ENCODE measurements at regions of chr4 and their contacts with region 1.

Region 1: DNA sequence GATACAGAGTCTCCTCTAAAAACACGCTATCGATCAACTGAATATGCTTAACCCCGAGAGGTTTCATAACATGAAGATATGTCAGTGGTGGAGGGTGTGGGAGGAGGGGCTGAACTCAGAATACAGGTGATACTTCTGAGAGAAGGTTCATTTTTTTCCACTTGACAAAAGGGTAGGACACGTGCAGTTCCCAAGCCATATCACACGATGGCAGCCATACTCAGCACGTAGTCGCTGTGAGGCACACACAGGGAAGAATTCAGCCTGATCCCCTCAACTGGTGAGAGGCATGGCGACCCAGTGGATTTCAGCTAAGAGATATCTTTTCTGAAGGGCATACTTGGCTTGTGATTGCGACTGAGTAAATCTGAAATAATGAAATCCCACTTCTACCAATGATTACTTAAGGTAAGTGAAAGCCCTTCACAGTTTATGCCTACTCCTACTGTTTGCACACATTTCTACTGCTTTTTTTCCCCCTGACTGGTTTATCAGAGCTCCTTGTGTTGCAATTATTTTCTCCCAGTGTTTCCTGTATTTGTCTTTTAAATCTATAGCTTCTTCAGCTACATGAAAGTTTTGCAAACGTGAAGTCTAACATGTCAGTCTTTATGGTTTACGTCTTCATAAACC is 133.1 kb downstream of the CORIN start:
- DNase-seq: peak; percentile 58
- H3K4me3 ChIP-seq: no peak overlapping the region
- H3K27ac ChIP-seq: no peak overlapping the region
- H3K4me1 ChIP-seq: peaks cover 0 to 4% of the 10 kb centered on the region in 2 experiments; a peak in 3 of 4 replicates
- H3K27me3 ChIP-seq: no peaks in the 10 kb centered on the region
- CTCF ChIP-seq: peak; percentile 46
- EP300 ChIP-seq: no peak
- RAD21 ChIP-seq: peak; percentile 92

Region 2: GRCh38 chr4:47686294-47686872 is 18.4 kb before region 1 on chr4:
- CTCF ChIA-PET with region 1: interaction called, 15 read pairs
- POLR2A ChIA-PET with region 1: no interaction called
- DNase-seq: peak; percentile 42
- H3K4me3 ChIP-seq: no peak overlapping the region; a peak in 1 of 4 replicates
- H3K27ac ChIP-seq: no peak overlapping the region
- H3K4me1 ChIP-seq: no peaks in the 10 kb centered on the region
- H3K27me3 ChIP-seq: no peaks in the 10 kb centered on the region
- CTCF ChIP-seq: peak; percentile 66
- EP300 ChIP-seq: no peak
- RAD21 ChIP-seq: peak; percentile 61

Region 3: DNA sequence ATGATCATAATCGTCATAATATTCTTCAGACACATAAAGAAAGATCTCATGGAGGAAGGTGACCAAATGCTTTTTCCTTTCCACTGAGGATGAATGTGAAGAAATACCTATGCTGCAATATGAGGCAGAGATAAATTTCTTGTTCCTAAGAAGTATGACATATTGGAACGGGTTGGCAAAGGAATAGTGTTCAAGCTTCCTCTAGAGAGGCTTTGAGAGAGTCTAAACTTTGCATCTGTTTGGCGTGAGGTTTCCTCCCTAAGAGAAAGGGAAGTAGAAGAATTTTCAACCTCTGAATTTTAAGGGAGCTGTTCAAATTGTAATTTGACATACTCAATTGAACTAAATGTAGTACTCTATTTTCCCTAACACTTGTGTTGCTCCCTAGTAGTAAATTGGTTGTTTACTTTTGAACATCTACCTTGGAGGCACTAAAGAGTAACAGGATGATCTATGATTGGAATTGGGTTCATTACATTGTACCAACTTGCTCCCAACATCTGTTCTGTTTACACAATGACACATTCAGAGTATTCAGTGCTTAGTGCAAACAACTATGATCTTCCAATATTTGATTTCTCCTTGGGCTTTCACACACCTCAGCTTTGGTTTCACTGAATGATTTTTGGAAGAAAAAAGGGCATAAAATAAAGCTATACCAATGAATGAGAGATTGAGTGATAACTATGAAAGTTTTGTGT is 11.1 kb after region 1 on chr4:
- CTCF ChIA-PET with region 1: interaction called, 30 read pairs
- POLR2A ChIA-PET with region 1: no interaction called
- DNase-seq: no peak
- H3K4me3 ChIP-seq: no peak overlapping the region
- H3K27ac ChIP-seq: no peak overlapping the region
- H3K4me1 ChIP-seq: no peaks in the 10 kb centered on the region; a peak in 1 of 4 replicates
- H3K27me3 ChIP-seq: 0 out of 2 replicates have a peak, but pooled peaks cover 6% of the 10 kb centered on the region
- CTCF ChIP-seq: no peak
- EP300 ChIP-seq: no peak
- RAD21 ChIP-seq: no peak

Region 4: DNA sequence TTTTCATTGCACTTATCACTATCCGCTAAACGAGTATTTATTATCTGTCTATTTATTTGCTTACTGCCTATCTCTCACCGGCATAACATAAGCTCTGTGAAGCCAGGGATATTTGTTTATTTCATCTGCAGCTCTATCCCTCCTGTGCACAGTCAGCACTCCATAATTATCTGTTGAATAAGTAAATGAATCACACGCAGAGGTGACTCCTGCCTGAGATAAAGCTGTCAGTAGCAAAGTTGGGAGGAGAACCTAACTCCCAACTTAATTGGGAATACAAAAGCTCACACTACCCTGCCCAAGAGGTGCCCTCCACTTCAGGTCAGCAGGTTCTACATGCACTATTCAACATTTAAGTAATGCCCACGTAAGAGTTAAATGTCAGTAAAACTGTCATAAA is 47.4 kb after region 1 on chr4:
- CTCF ChIA-PET with region 1: interaction called, 12 read pairs
- POLR2A ChIA-PET with region 1: no interaction called
- DNase-seq: no peak
- H3K4me3 ChIP-seq: no peak overlapping the region
- H3K27ac ChIP-seq: no peak overlapping the region
- H3K4me1 ChIP-seq: 0 out of 4 replicates have a peak, but pooled peaks cover 0 to 3% of the 10 kb centered on the region in 2 experiments
- H3K27me3 ChIP-seq: no peaks in the 10 kb centered on the region
- CTCF ChIP-seq: no peak
- EP300 ChIP-seq: no peak
- RAD21 ChIP-seq: no peak

Region 5: DNA sequence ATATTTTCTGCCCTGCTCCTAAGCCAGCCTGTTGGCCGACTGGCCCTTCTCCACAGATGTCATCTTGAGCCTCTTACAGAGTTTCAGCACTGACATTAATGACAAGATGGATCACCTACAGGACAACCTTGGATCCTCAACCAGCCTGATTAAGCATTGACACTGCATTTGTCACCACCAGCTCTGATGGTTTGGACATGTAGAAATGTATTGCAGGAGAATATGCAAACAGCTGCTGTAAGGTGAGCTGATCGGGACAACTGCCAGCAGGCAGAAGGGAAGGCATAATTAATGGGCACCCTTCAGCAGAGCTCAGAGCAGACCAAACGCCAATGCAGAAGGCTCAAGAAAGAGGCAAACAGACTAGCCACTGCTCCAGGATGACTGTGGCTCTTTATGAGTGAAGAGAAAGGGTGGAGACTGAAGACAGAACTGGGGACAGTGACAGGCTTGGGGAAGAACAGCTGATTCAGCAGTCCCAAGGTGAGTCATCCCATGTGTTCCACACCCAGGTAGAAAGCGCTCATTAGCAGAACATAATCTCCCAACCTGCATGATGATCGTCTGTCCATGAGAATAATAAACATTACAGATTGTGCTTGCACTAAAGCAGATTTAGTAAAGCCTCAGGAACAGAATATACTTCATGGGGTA is 126.3 kb after region 1 on chr4:
- CTCF ChIA-PET with region 1: interaction called, 417 read pairs
- POLR2A ChIA-PET with region 1: interaction called, 7 read pairs
- DNase-seq: no peak
- H3K4me3 ChIP-seq: no peak overlapping the region
- H3K27ac ChIP-seq: no peak overlapping the region
- H3K4me1 ChIP-seq: peaks cover 0 to 11% of the 10 kb centered on the region in 2 experiments; a peak in 2 of 4 replicates
- H3K27me3 ChIP-seq: no peaks in the 10 kb centered on the region
- CTCF ChIP-seq: no peak
- EP300 ChIP-seq: no peak
- RAD21 ChIP-seq: no peak

Measured in SK-N-SH (cell line).